ENCODE measurements at regions of chr3 and their contacts with region 1.

Region 1: GRCh38 chr3:185176750-185177359 is 24.0 kb upstream of the C3orf70 start:
- DNase-seq: no peak
- ATAC-seq: peak; percentile 69
- H3K4me3 ChIP-seq: no peak overlapping the region
- H3K27ac ChIP-seq: no peak overlapping the region
- H3K4me1 ChIP-seq: peaks cover 21% of the 10 kb centered on the region
- H3K27me3 ChIP-seq: no peaks in the 10 kb centered on the region
- CTCF ChIP-seq: peak; percentile 53 to 63 (median 61); a peak in 5 of 6 replicates
- EP300 ChIP-seq: no peak
- POLR2A ChIP-seq: no peak
- RAD21 ChIP-seq: peak; percentile 67

Region 2: DNA sequence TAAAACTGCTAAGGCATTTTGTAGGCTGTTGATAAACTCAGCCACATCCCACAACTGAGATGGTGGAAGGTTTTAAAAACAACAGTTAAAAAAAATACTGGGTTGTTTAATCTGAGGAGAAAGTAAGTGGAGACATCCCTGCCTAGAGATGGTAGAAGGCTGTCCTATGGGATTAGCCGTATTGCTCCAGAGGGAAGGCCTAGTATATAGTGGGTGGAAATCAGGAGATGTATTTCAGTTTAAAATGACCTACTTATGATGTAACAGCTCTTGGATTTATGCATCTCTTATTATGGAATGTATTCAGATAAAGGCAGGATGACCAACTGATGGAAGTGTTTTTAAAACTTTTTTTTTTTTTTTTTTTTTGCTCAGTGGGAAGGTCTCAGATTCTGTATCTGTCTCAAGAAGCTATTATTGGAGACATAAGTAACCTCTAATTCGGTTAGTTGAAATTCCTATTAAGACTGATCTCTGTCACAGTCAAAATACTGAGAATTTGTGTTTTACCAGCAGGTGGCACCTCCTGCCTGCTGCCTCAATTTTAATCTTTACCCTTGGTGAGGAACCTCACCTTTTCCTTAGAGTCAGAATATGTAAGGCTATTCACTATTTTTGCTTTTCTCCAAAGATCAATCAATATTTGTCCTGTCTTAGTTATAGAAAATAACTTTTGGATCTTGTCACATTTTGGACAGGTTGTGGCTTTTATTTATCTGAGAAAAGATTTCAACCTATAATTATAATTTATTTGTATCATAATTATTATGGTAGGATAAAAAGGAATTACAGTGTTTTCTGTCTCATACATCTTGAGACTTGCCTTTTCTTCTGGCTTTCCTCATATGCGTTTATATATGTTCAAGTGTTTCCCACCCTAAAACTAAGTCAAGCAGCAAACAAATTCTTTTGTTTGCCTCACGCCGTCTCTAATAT is 301.9 kb before region 1 on chr3:
- CTCF ChIA-PET with region 1: interaction called, 27 read pairs
- POLR2A ChIA-PET with region 1: interaction called, 3 read pairs
- RAD21 ChIA-PET with region 1: interaction called, 7 read pairs
- SMC1A ChIA-PET with region 1: interaction called, 9 read pairs
- in situ Hi-C with region 1: loop called (anchors 5 kb)
- intact Hi-C with region 1: loop called (anchors 1 kb)
- DNase-seq: no peak
- ATAC-seq: peak; percentile 69
- H3K4me3 ChIP-seq: no peak overlapping the region
- H3K27ac ChIP-seq: no peak overlapping the region
- H3K4me1 ChIP-seq: no peaks in the 10 kb centered on the region
- H3K27me3 ChIP-seq: no peaks in the 10 kb centered on the region
- CTCF ChIP-seq: peak; percentile 51 to 73 (median 52); a peak in 5 of 6 replicates
- EP300 ChIP-seq: no peak
- POLR2A ChIP-seq: no peak
- RAD21 ChIP-seq: peak; percentile 88

Region 3: GRCh38 chr3:184918741-184919140 is 258.1 kb before region 1 on chr3:
- CTCF ChIA-PET with region 1: no interaction called
- POLR2A ChIA-PET with region 1: no interaction called
- RAD21 ChIA-PET with region 1: no interaction called
- SMC1A ChIA-PET with region 1: no interaction called
- in situ Hi-C with region 1: no loop called
- intact Hi-C with region 1: no loop called
- DNase-seq: no peak
- ATAC-seq: no peak
- H3K4me3 ChIP-seq: no peak overlapping the region
- H3K27ac ChIP-seq: no peak overlapping the region
- H3K4me1 ChIP-seq: no peaks in the 10 kb centered on the region
- H3K27me3 ChIP-seq: no peaks in the 10 kb centered on the region
- CTCF ChIP-seq: no peak
- EP300 ChIP-seq: no peak
- POLR2A ChIP-seq: no peak
- RAD21 ChIP-seq: no peak

Region 4: DNA sequence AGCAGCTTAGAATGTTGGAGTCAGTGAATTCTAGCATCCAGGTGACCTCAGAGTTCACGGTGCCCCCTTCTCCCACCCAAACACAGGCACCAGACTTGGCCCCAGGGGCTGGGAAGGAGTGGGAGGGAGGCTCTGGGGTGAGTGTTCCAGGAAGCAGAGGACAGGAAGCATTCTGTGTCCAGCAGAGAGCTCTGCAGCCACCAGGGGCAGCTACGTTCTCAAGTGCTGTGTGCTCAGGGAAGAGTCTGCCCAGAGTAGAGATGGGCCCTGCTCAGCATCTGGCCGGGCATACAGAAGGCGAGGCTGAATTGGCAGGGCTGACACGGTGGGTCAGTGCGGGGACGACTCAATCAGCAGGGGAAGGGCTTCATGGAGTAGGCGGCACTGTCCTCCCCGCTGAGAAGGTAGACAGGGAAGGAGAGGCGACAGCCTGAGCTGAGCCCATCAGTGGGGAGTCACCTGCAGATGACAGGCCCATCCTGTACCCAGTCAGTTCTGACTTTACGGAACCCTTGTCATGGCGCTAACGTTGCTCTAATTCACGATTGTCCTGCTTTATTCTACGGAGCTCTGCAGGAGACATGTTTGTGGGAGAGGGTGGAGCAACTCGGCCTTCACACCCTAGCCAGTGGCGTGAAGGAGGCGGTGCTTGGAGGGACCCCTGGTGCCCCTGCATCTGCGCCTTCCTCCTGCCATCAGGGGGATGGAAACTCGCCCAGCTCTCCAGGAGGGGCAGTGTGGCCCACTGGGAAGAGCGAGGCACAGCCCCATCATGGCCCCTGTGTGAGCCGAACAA is 106.2 kb before region 1 on chr3:
- CTCF ChIA-PET with region 1: interaction called, 11 read pairs
- POLR2A ChIA-PET with region 1: interaction called, 3 read pairs
- RAD21 ChIA-PET with region 1: interaction called, 3 read pairs
- SMC1A ChIA-PET with region 1: interaction called, 6 read pairs
- in situ Hi-C with region 1: no loop called
- intact Hi-C with region 1: no loop called
- DNase-seq: no peak
- ATAC-seq: peak; percentile 78
- H3K4me3 ChIP-seq: no peak overlapping the region
- H3K27ac ChIP-seq: no peak overlapping the region
- H3K4me1 ChIP-seq: no peaks in the 10 kb centered on the region
- H3K27me3 ChIP-seq: no peaks in the 10 kb centered on the region
- CTCF ChIP-seq: 0 out of 6 replicates have a peak, but pooled peaks have one; percentile 1 to 9 (median 6)
- EP300 ChIP-seq: no peak
- POLR2A ChIP-seq: no peak
- RAD21 ChIP-seq: no peak

Region 5: GRCh38 chr3:185164428-185165217 is 12.2 kb before region 1 on chr3:
- CTCF ChIA-PET with region 1: interaction called, 10 read pairs
- POLR2A ChIA-PET with region 1: no interaction called
- RAD21 ChIA-PET with region 1: interaction called, 4 read pairs
- SMC1A ChIA-PET with region 1: interaction called, 9 read pairs
- in situ Hi-C with region 1: no loop called
- intact Hi-C with region 1: no loop called
- DNase-seq: no peak
- ATAC-seq: no peak
- H3K4me3 ChIP-seq: no peak overlapping the region
- H3K27ac ChIP-seq: no peak overlapping the region
- H3K4me1 ChIP-seq: no peaks in the 10 kb centered on the region
- H3K27me3 ChIP-seq: no peaks in the 10 kb centered on the region; a peak in 2 of 4 replicates
- CTCF ChIP-seq: no peak
- EP300 ChIP-seq: no peak
- POLR2A ChIP-seq: no peak
- RAD21 ChIP-seq: no peak

Region 6: GRCh38 chr3:185188816-185189215 is 12.0 kb after region 1 on chr3:
- CTCF ChIA-PET with region 1: interaction called, 18 read pairs
- POLR2A ChIA-PET with region 1: no interaction called
- RAD21 ChIA-PET with region 1: no interaction called
- SMC1A ChIA-PET with region 1: interaction called, 5 read pairs
- in situ Hi-C with region 1: no loop called
- intact Hi-C with region 1: no loop called
- DNase-seq: no peak
- ATAC-seq: no peak
- H3K4me3 ChIP-seq: no peak overlapping the region
- H3K27ac ChIP-seq: no peak overlapping the region
- H3K4me1 ChIP-seq: no peaks in the 10 kb centered on the region
- H3K27me3 ChIP-seq: no peaks in the 10 kb centered on the region
- CTCF ChIP-seq: no peak
- EP300 ChIP-seq: no peak
- POLR2A ChIP-seq: no peak
- RAD21 ChIP-seq: no peak

Region 7: GRCh38 chr3:185215873-185216606 is 39.2 kb after region 1 on chr3:
- CTCF ChIA-PET with region 1: interaction called, 10 read pairs
- POLR2A ChIA-PET with region 1: no interaction called
- RAD21 ChIA-PET with region 1: interaction called, 3 read pairs
- SMC1A ChIA-PET with region 1: interaction called, 5 read pairs
- in situ Hi-C with region 1: no loop called
- intact Hi-C with region 1: no loop called
- DNase-seq: no peak
- ATAC-seq: peak; percentile 52; the same call in 2 of the 3 replicates
- H3K4me3 ChIP-seq: no peak overlapping the region
- H3K27ac ChIP-seq: no peak overlapping the region
- H3K4me1 ChIP-seq: no peaks in the 10 kb centered on the region
- H3K27me3 ChIP-seq: no peaks in the 10 kb centered on the region
- CTCF ChIP-seq: peak; percentile 37 to 60 (median 43); a peak in 4 of 6 replicates
- EP300 ChIP-seq: no peak
- POLR2A ChIP-seq: no peak
- RAD21 ChIP-seq: peak; percentile 82

Measured in GM12878 (cell line).